ENCODE measurements at regions of chrX and their contacts with region 1.

Region 1: DNA sequence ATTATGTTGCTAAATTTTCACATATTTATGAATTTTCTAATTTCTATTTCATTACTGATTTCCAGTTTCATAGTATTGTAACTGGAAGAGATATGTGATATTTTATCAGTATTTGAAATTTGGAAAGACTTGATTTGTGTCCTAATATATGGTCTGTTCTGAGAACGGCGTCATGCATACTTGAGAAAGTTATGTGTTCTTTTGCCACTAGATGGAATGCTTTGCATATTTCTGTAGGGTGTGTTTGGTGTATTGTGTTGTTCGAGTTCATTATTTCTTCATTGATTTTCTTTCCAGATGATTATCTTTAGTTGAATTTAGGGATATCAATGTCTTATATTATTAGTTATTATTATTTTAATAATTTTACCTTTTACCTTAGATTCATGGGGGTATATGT is 110.6 kb upstream of the ITM2A start:
- DNase-seq: no peak
- H3K4me3 Mint-ChIP-seq: no peak overlapping the region
- H3K27ac Mint-ChIP-seq: no peak overlapping the region
- H3K4me1 Mint-ChIP-seq: no peaks in the 10 kb centered on the region
- H3K27me3 Mint-ChIP-seq: no peaks in the 10 kb centered on the region
- CTCF ChIP-seq: no peak

Region 2: GRCh38 chrX:79592259-79592658 is 114.6 kb after region 1 on chrX:
- CTCF ChIA-PET with region 1: no interaction called
- intact Hi-C with region 1: loop called (anchors 10 kb)
- DNase-seq: no peak
- H3K4me3 Mint-ChIP-seq: no peak overlapping the region
- H3K27ac Mint-ChIP-seq: no peak overlapping the region
- H3K4me1 Mint-ChIP-seq: no peaks in the 10 kb centered on the region
- H3K27me3 Mint-ChIP-seq: no peaks in the 10 kb centered on the region
- CTCF ChIP-seq: peak; percentile 17

Measured in Calu3 (cell line).